Adrenal gland (tissue), 19 donors: ENCODE measurements at regions of chr19 and their contacts with region 1.

Region 1: GRCh38 chr19:12194827-12195731 is 32.2 kb downstream of the ZNF136 start:
- DNase-seq: peak; percentile 81 to 94 (median 85)
- H3K4me3 ChIP-seq: peak overlapping the region in 2 of 4 donors; percentile 30 to 63
- H3K27ac ChIP-seq: peak overlapping the region in 4 of 5 donors; percentile 10 to 88 (median 61)
- H3K4me1 ChIP-seq: peaks cover 0 to 14% of the 10 kb centered on the region in 2 donors
- H3K27me3 ChIP-seq: no peaks in the 10 kb centered on the region
- CTCF ChIP-seq: no peak
- POLR2A ChIP-seq: peak; percentile 30 to 68

Region 2: DNA sequence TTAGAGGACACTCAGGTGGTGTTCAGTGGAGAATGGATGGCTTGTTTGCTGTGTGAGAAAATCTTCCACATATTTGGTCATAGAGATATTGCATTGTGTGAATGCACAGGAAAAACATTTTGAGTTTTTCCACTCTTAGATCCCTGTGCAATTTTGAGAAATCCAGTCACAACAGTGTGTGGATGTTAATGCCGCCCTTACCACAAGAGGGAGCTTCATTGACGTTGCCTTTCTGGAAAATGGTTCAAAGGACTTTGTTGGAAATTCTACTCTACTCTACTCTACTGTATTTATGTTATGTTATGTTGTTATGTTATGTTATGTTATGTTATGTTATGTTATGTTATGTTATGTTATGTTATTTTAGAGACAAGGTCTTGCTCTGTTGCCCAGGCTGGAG is 68.4 kb before region 1 on chr19:
- intact Hi-C with region 1: no loop called
- DNase-seq: peak in 2 of 7 donors; percentile 29 to 32
- H3K4me3 ChIP-seq: no peak overlapping the region
- H3K27ac ChIP-seq: no peak overlapping the region
- H3K4me1 ChIP-seq: no peaks in the 10 kb centered on the region
- H3K27me3 ChIP-seq: no peaks in the 10 kb centered on the region
- CTCF ChIP-seq: peak; percentile 17 to 53 (median 42)
- POLR2A ChIP-seq: no peak

Region 3: GRCh38 chr19:12156223-12157058 is 38.6 kb before region 1 on chr19 and contains the start of gene ZNF625:
- intact Hi-C with region 1: no loop called
- DNase-seq: peak; percentile 88 to 97 (median 95)
- H3K4me3 ChIP-seq: peak within 1 kb of the TSS; percentile 42 to 92 (median 78)
- H3K27ac ChIP-seq: peak within 1 kb of the TSS in 4 of 5 donors; percentile 58 to 88 (median 78)
- H3K4me1 ChIP-seq: peaks cover 5 to 16% of the 10 kb centered on the region in 2 donors
- H3K27me3 ChIP-seq: no peaks in the 10 kb centered on the region
- CTCF ChIP-seq: no peak
- POLR2A ChIP-seq: peak in 1 of 2 donors; percentile 80
- total RNA-seq, gene ZNF625: 5.1 to 14.1 (median 8.8) TPM

Region 4: DNA sequence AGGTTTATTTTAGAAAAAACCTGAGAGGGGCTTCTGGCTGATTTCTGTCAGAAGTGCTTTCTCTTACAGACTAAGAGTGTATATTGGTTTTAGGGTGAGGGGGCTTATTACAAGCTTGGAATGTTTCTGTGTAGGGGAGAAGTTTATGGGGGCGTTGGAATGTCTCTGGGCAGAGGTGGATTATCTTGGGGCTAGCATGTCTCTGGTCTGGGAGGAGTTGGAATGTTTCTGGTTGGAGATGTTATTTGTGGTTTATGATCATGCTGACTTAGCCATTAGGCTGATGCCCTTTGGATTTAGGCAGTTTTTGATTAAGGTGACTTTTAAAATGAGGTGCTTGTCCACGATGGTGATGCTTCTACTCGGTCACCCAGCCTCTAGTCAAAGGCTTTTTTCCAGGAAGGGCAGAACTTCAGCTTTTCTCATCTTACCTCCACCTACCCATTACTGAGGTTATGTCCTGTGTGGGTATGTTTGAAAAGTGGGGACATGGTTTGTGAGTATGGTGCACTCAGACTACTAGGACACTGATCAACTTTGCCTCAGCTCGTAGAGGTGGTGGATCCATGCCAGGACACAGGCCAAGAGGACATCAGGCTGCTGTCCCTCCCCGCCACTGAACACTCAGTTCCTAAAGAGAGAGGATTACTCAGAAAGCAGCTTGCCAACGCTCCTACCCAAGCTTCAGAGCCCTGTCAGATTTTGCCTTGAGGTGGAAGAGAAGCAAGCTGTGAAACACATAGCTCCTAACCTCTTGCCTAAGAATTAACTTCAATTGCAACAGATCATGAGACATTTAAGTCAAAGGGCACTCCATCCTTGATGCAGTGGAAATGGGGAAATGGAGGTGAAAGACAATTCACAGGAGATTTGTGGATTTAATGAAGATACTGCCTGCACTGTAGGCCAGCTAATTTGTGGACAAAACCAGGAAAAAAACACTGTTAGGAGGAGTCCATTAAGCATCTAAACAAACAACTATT is 36.0 kb after region 1 on chr19:
- intact Hi-C with region 1: loop called in 1 of 2 experiments (anchors 5 kb)
- DNase-seq: no peak
- H3K4me3 ChIP-seq: no peak overlapping the region
- H3K27ac ChIP-seq: no peak overlapping the region
- H3K4me1 ChIP-seq: no peaks in the 10 kb centered on the region
- H3K27me3 ChIP-seq: no peaks in the 10 kb centered on the region
- CTCF ChIP-seq: no peak
- POLR2A ChIP-seq: no peak

Region 5: GRCh38 chr19:12350890-12351197 is 155.8 kb after region 1 on chr19:
- intact Hi-C with region 1: loop called in 1 of 2 experiments (anchors 10 kb)
- DNase-seq: no peak
- H3K4me3 ChIP-seq: peak overlapping the region in 1 of 4 donors; percentile 6
- H3K27ac ChIP-seq: no peak overlapping the region
- H3K4me1 ChIP-seq: no peaks in the 10 kb centered on the region
- H3K27me3 ChIP-seq: no peaks in the 10 kb centered on the region
- CTCF ChIP-seq: no peak
- POLR2A ChIP-seq: no peak

Region 6: DNA sequence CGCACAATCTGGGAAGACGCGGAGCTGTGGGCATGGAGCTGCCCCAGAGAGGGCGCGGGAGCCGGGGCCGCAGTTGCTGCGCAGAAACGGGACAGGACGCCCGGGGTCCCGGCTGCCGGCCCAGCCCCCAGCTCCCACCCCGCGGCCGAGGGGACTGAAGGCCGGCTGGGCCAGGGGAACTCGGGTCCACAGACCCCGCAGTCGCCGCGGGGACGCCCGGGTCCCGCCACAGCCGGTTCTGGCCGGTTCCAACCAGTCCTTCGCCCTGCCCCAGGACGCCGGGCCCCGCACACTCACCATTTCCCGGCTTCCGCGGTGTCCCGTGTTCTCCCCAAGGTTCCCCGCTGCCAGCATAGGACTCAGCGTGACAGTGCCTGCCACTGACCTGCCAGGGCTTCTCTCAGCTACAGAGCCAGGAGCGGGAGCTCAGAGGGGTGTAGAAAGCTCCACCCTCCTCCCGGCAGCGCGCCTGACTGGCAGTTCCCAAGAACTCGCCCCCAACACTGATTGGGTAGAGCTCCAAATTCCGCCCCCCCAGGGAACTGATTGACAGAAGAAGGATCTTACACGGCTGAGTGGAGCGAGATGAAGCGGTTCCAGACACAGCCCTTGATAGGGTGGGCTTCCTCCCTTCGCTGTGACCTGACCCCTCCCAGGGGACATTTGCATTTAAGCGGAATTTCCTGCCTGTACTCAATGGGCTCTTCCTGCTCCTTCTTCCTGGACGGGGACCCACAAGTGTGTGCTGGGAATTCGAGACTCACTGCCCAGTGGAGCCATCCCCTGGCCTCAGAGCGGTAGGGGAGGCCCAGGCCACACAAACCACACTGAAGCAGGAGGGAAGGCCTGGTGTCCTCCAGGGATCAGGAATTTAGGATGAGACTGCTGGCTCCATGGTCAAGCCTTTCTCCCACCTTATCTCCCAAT is 170.4 kb after region 1 on chr19 and contains the start of gene ZNF442:
- intact Hi-C with region 1: no loop called
- DNase-seq: peak; percentile 97 to 99 (median 98)
- H3K4me3 ChIP-seq: peak within 1 kb of the TSS; percentile 21 to 95 (median 72)
- H3K27ac ChIP-seq: peak within 1 kb of the TSS; percentile 68 to 96 (median 85)
- H3K4me1 ChIP-seq: peaks cover 0 to 8% of the 10 kb centered on the region in 2 donors
- H3K27me3 ChIP-seq: no peaks in the 10 kb centered on the region
- CTCF ChIP-seq: peak; percentile 47 to 84 (median 72)
- POLR2A ChIP-seq: peak; percentile 75 to 96
- total RNA-seq, gene ZNF442: 1.4 to 7.3 (median 3.5) TPM